ENCODE measurements at regions of chr3 and their contacts with region 1.

Region 1: DNA sequence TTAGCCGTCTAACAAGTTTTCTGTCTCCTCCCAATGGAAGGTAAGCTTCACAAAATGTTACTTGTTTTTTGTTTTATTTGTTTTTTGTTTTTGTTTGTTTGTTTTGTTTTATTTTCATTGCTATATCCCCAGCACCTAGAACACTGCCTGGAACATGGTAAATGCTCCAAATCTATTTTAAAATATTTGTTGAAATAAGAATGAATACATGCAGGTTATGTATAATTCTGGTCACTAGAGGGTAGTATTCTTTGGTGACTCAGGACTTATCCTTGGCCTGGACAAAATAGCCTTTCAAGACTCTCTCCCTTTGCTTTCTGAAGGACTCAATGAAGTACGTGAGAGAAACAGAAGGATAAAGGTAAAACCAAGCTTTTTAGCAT is 47.0 kb upstream of the PPP2R3A start:
- DNase-seq: no peak
- H3K4me3 ChIP-seq: no peak overlapping the region
- H3K27ac ChIP-seq: no peak overlapping the region
- H3K4me1 ChIP-seq: no peaks in the 10 kb centered on the region
- H3K27me3 ChIP-seq: no peaks in the 10 kb centered on the region
- CTCF ChIP-seq: peak; percentile 36 to 62 (median 38)

Region 2: DNA sequence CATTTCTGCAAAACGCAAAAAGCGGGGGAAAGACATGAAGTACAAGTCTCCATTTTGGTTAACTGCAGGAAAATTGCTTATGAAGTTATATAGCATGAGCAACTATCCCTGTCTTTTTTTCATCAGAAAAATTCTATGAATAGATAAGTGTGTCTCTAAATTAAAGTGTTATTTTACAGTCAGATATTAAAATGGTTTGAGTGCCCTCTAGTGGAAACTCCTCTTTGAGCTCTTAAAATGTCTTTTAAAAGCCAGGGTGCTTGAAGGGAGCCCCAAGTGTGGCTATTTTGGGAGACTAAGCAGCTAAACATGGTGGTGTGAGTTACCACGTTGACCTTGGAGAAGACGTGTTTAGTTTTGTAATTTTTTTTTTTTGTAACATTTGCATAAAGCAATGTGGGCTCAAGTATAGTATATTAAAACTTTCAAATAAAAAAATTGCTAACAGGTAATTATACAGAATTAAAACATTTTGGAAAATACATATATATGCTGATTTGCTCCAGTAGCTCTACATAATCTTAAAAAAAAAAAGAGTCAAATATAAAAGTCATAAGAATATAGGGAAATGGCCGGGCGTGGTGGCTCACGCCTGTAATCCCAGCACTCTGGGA is 124.1 kb after region 1 on chr3:
- intact Hi-C with region 1: loop called (anchors 1 kb)
- DNase-seq: no peak
- H3K4me3 ChIP-seq: no peak overlapping the region
- H3K27ac ChIP-seq: no peak overlapping the region
- H3K4me1 ChIP-seq: no peaks in the 10 kb centered on the region
- H3K27me3 ChIP-seq: no peaks in the 10 kb centered on the region
- CTCF ChIP-seq: peak in 2 of 3 experiments; percentile 11 to 71

Measured in ascending aorta (tissue), 2 donors.